ENCODE measurements at regions of chr19 and their contacts with region 1.

Region 1: GRCh38 chr19:3984908-3985642 is at the start of gene EEF2:
- DNase-seq: peak; percentile 90
- H3K4me3 Mint-ChIP-seq: peak within 1 kb of the TSS; percentile 93
- H3K27ac Mint-ChIP-seq: peak within 1 kb of the TSS; percentile 95
- H3K4me1 Mint-ChIP-seq: peaks cover 57% of the 10 kb centered on the region
- H3K27me3 Mint-ChIP-seq: no peaks in the 10 kb centered on the region
- total RNA-seq, gene EEF2: 1,543 to 1,592 TPM

Region 2: GRCh38 chr19:3762501-3763459 is 222.3 kb before region 1 on chr19 and contains the start of gene MRPL54:
- CTCF ChIA-PET with region 1: interaction called, 24 read pairs
- POLR2A ChIA-PET with region 1: interaction called, 7 read pairs
- DNase-seq: peak; percentile 100
- H3K4me3 Mint-ChIP-seq: peak within 1 kb of the TSS; percentile 90
- H3K27ac Mint-ChIP-seq: peak within 1 kb of the TSS; percentile 98
- H3K4me1 Mint-ChIP-seq: peaks cover 45% of the 10 kb centered on the region
- H3K27me3 Mint-ChIP-seq: no peaks in the 10 kb centered on the region
- total RNA-seq, gene MRPL54: 71.5 to 75.8 TPM

Region 3: DNA sequence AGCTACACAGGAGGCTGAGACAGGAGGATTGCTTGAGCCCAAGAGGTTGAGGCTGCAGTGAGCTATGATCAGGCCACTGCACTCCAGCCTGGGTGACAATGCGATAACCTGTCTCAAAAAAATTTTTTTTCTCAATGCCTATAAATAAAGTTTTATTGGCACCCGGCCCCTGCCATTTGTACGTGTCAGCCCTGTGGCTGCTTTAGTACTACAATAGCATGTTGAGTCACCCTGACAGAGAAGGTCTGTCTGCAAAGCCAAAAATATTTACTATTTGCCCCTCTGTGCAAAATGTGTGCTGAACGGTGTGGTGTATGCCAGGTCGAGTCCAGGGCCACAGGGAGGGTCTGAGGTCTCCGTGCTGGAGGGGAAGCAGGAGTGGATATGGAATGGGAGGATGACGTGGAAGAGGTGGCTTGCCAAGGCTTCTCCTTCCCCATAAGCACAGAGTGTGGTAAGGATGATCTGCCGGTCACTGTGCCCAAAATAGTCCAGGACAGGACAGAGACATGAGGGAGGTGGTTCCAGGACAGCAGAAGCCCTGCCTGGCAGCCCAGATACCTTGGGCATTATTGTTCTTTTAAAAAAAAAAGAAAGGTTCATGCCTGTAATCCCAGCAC is 42.2 kb before region 1 on chr19:
- CTCF ChIA-PET with region 1: no interaction called
- POLR2A ChIA-PET with region 1: no interaction called
- DNase-seq: no peak
- H3K4me3 Mint-ChIP-seq: no peak overlapping the region
- H3K27ac Mint-ChIP-seq: no peak overlapping the region
- H3K4me1 Mint-ChIP-seq: peaks cover 5% of the 10 kb centered on the region
- H3K27me3 Mint-ChIP-seq: no peaks in the 10 kb centered on the region

Region 4: DNA sequence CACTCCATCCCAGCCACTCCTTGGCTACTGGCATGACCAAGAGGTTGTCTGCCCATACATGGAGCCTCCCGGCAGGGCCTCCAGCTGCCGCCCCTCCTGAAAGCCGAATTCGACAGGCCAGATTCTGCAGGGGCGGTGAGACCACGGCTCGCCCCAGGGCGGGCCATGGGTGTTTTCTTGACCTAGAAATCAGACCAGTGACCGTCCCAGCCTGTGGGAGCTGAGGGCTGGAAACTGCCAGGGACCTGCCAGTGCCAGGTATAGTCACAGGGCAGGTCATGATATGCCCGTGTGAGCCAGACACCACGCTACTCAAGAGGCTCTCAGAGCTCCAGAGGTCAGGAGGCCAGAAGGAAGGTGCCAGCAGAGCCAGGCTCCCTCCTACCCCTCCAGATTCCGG is 31.0 kb before region 1 on chr19:
- CTCF ChIA-PET with region 1: no interaction called
- POLR2A ChIA-PET with region 1: no interaction called
- DNase-seq: no peak
- H3K4me3 Mint-ChIP-seq: no peak overlapping the region
- H3K27ac Mint-ChIP-seq: no peak overlapping the region
- H3K4me1 Mint-ChIP-seq: no peaks in the 10 kb centered on the region
- H3K27me3 Mint-ChIP-seq: peaks cover 6% of the 10 kb centered on the region

Region 5: DNA sequence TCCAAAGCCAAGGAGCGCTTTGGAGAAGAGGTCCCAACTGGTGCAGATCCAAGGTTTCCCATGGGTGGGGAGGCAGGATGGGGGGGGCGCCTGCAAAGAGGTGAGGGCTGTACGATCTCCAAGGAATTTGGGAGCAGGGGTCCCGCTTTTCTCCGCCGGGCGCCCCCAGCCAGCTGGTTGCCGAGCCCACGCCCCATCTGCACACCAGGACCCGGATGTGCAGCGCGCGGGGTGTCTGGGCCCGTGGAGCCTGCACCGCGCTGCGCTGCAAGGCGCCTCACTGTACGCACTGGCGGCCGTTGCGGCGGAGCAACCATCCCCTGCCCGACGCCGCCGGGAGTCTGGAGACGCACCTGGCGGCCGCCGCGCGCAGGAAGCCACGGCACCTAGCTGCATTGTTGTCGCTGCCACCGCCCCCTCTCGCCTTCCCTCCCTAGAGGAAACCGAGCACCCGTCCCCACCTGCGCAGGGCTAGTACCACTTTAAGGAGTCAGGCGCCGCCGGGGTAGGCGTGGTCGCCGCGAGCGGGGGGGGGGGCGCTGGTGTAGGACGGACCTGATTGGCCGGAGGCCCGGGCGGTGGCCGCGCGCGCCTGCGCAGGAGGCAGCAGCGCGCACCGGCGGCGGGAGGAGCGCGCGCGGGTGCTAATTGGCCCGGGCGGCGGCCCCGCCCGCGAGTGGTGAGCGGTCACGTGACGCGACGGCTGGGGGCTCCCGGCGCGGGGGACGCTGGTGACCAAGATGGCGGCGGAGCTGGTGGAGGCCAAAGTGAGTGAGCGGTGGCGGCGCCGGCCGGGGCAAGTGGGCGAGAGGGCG is 22.2 kb after region 1 on chr19 and contains the start of gene PIAS4:
- CTCF ChIA-PET with region 1: interaction called, 48 read pairs
- POLR2A ChIA-PET with region 1: interaction called, 40 read pairs
- DNase-seq: peak; percentile 96
- H3K4me3 Mint-ChIP-seq: peak within 1 kb of the TSS; percentile 85
- H3K27ac Mint-ChIP-seq: peak within 1 kb of the TSS; percentile 71
- H3K4me1 Mint-ChIP-seq: peaks cover 29% of the 10 kb centered on the region
- H3K27me3 Mint-ChIP-seq: no peaks in the 10 kb centered on the region
- total RNA-seq, gene PIAS4: 28.6 to 33.2 TPM

Region 6: DNA sequence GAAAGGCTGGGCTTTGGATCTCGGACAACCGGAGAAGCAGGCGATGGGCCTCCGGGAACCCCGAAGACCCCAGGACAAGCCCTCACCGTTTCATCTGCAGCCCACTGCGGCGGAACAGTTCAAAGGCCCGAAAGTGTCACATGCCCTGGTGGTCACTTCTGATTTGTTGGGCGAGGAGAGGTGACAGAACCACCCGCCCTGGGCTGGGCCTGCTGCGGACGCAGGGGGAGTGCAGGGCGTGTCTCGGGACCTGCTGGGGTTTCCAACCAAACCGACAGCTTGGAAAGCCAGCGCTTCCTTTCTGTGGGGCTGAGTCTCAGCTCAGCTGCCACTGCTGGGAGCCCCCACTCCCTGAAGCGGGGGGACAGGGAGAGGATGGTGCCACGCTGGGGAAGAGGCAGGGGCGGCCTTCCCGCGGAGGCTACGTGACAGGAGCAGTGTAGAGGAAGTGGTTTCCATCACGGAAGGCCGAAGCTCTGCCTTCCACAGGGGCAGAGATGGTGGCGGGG is 104.4 kb after region 1 on chr19:
- CTCF ChIA-PET with region 1: interaction called, 10 read pairs
- POLR2A ChIA-PET with region 1: interaction called, 3 read pairs
- DNase-seq: peak; percentile 81
- H3K4me3 Mint-ChIP-seq: peak overlapping the region; percentile 68
- H3K27ac Mint-ChIP-seq: peak overlapping the region; percentile 98
- H3K4me1 Mint-ChIP-seq: peaks cover 59% of the 10 kb centered on the region
- H3K27me3 Mint-ChIP-seq: no peaks in the 10 kb centered on the region

Region 7: DNA sequence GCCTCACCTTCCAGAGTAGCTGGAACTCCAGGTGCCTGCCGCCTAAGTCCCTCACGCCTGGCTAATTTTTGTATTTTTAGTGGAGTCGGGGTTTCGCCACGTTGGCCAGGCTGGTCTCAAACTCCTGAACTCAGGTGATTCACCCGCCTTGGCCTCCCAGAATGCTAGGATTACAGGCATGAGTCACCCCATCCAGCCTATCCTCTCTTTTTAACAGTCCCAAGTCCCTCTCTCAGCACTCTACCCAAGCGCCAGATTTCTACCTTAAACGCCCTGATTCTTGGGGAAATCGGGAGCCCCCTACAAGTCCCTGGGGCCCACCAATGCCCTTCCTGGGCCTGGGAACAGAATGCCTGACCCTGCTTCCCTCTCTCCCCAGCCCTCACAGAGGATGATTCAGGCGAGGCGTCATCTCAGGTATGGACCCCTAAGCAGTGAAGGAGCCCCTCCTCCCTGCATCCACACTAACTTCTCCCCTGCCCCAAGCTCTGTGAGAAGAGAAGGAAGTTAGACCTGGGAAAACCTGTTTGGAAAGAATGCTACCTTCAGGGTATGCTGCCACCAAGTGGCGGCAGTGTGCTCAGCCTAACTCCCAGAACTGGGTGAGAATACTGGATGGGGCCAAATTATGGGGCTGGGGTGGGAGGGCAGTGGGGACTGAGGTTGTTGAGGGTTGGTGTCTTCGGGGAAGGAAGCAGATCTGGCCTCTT is 223.5 kb after region 1 on chr19:
- CTCF ChIA-PET with region 1: interaction called, 12 read pairs
- POLR2A ChIA-PET with region 1: interaction called, 3 read pairs
- DNase-seq: no peak
- H3K4me3 Mint-ChIP-seq: no peak overlapping the region
- H3K27ac Mint-ChIP-seq: no peak overlapping the region
- H3K4me1 Mint-ChIP-seq: no peaks in the 10 kb centered on the region
- H3K27me3 Mint-ChIP-seq: peaks cover 2% of the 10 kb centered on the region

Measured in activated CD4-positive, alpha-beta memory T cell treated with anti-CD3 and anti-CD28 coated beads, Interleukin-2, amount 10 ng/mL, durations not matched to agents 7 days and 5 days (primary cell).